Activated T-helper 2 cell treated with anti-CD3 and anti-CD28 coated beads, Interferon-gamma antibody, Interleukin-2, Interleukin-4, amounts not matched to agents 10 μg/mL and 5 μg/mL and 100 μg/mL, durations not matched to agents 14 hours and 24 hours and 36 hours (primary cell): ENCODE measurements at regions of chr5 and their contacts with region 1.

Region 1: GRCh38 chr5:170434966-170435605 is 45.9 kb upstream of the KCNMB1 start:
- DNase-seq: peak; percentile 27
- H3K4me3 Mint-ChIP-seq: no peak overlapping the region
- H3K27ac Mint-ChIP-seq: no peak overlapping the region
- H3K4me1 Mint-ChIP-seq: no peaks in the 10 kb centered on the region
- H3K27me3 Mint-ChIP-seq: peaks cover 5% of the 10 kb centered on the region

Region 2: DNA sequence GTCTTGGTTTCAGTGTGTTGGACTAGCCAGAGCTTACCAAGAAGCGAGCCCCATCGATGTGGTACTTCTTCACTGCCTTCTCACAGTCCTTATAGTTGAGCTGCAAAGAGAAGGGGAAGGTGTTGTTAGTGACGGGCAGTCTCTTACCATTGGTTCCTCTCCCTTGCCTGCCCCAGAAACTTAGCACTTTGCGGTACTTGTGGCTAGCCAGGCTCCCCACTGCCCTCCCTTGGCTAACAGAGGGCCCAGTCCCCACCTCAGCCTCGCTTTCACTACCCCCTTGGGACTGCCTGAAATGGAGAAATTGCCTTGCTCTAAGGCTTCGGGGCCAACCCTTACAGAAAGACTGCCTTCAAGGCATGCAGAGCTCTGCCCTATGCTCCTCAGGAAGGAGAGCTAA is 141.8 kb before region 1 on chr5:
- intact Hi-C with region 1: no loop called
- DNase-seq: peak; percentile 60
- H3K4me3 Mint-ChIP-seq: peak overlapping the region; percentile 98
- H3K27ac Mint-ChIP-seq: peak overlapping the region; percentile 92
- H3K4me1 Mint-ChIP-seq: peaks cover 76% of the 10 kb centered on the region
- H3K27me3 Mint-ChIP-seq: no peaks in the 10 kb centered on the region

Region 3: GRCh38 chr5:170393235-170393634 is 41.9 kb before region 1 on chr5:
- intact Hi-C with region 1: no loop called
- DNase-seq: no peak
- H3K4me3 Mint-ChIP-seq: no peak overlapping the region
- H3K27ac Mint-ChIP-seq: no peak overlapping the region
- H3K4me1 Mint-ChIP-seq: peaks cover 11% of the 10 kb centered on the region
- H3K27me3 Mint-ChIP-seq: peaks cover 27% of the 10 kb centered on the region

Region 4: DNA sequence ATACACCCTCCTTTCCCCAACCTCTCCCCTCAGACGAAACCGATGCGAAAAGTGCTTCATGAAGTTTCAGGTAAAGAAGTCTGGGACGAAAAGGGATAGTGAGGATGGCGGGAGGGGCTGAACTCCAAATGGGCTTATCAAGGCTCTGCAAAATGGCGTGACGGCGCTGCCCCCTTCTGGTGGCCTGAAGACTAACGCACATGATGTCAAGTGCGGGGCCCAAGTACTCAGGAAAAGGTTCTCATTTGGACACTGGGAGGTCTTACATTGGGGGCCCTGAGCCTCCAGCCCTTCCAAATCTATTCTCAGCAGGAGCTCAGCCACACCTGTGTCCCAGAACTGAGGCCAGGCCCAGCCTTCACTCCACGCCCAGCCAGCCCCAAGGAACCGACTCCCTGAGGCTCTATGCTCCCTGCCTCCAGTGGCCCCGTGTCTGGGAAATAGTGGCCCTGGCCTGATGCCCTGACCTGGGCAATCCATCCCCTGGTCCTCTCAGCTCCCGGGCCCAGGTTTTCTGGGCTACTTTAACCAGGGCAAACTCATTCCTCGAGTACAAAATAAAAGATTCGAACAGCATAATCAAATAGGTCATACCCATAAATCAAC is 188.6 kb after region 1 on chr5:
- intact Hi-C with region 1: loop called (anchors 2 kb)
- DNase-seq: no peak
- H3K4me3 Mint-ChIP-seq: no peak overlapping the region
- H3K27ac Mint-ChIP-seq: no peak overlapping the region
- H3K4me1 Mint-ChIP-seq: no peaks in the 10 kb centered on the region
- H3K27me3 Mint-ChIP-seq: peaks cover 3% of the 10 kb centered on the region

Region 5: GRCh38 chr5:170633235-170634081 is 198.4 kb after region 1 on chr5:
- intact Hi-C with region 1: loop called (anchors 1 kb)
- DNase-seq: no peak
- H3K4me3 Mint-ChIP-seq: no peak overlapping the region
- H3K27ac Mint-ChIP-seq: no peak overlapping the region
- H3K4me1 Mint-ChIP-seq: peaks cover 4% of the 10 kb centered on the region
- H3K27me3 Mint-ChIP-seq: peaks cover 6% of the 10 kb centered on the region